Ascending aorta (tissue), 2 donors: ENCODE measurements at regions of chr1 and their contacts with region 1.

Region 1: GRCh38 chr1:9292361-9293240 is at the start of gene SPSB1:
- DNase-seq: peak in 1 of 2 donors; percentile 82
- H3K4me3 ChIP-seq: peak within 1 kb of the TSS; percentile 89 to 95
- H3K27ac ChIP-seq: peak within 1 kb of the TSS; percentile 82 to 98
- H3K4me1 ChIP-seq: peaks cover 8 to 29% of the 10 kb centered on the region in 2 donors
- H3K27me3 ChIP-seq: no peaks in the 10 kb centered on the region
- CTCF ChIP-seq: no peak
- total RNA-seq, gene SPSB1: 64.9 TPM

Region 2: DNA sequence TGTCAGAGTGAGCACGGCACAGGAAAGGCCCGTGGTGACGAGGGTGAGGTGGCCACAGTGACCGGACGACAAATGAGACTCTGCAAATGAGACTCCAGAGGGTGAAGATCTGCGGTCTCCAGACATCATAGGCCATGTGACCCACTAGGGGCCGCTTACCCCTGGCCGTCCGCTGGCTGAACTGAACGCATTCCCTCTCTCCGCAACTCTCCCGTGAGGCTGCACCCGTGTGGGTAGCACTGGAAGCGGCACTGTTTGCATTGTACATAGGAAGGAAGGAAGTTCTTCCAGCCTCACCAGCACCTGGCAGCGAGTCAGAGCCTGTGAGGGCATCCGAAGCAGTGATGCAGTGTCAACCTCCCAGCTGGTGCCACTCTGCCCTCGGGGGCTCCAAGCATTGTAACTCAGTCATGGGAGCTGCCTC is 23.5 kb before region 1 on chr1:
- intact Hi-C with region 1: loop called (anchors 2 kb)
- DNase-seq: no peak
- H3K4me3 ChIP-seq: no peak overlapping the region
- H3K27ac ChIP-seq: no peak overlapping the region
- H3K4me1 ChIP-seq: peaks cover 3 to 7% of the 10 kb centered on the region in 2 donors
- H3K27me3 ChIP-seq: no peaks in the 10 kb centered on the region
- CTCF ChIP-seq: no peak

Region 3: DNA sequence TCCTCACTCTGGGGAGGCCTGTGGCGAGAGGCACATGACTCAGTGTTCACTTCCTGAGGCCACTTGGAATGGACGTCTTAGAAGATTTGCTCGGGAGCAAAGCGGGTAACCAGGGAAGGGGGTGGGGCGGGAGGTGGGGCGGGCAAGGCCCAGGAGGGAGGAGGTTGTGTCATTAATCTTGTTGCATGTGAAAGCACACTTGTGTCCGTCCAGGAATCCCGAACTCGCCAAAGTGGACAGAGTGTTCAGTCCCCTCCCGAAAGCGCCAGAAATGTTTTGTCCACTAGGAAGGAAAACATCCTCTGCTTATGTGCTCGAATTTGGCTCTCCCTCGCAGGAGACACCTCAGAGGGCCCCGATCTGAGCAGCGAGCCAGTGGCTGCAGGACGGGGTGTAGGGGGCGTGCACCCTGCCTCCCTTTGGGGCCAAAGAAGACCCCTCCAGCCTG is 84.3 kb after region 1 on chr1:
- intact Hi-C with region 1: loop called (anchors 2 kb)
- DNase-seq: peak; percentile 66 to 95
- H3K4me3 ChIP-seq: peak overlapping the region in 1 of 2 donors; percentile 41
- H3K27ac ChIP-seq: peak overlapping the region; percentile 89 to 96
- H3K4me1 ChIP-seq: peaks cover 51 to 68% of the 10 kb centered on the region in 2 donors
- H3K27me3 ChIP-seq: no peaks in the 10 kb centered on the region
- CTCF ChIP-seq: peak in 1 of 3 experiments; percentile 12

Region 4: GRCh38 chr1:9449106-9449627 is 156.6 kb after region 1 on chr1:
- intact Hi-C with region 1: loop called (anchors 2 kb)
- DNase-seq: peak in 1 of 2 donors; percentile 92
- H3K4me3 ChIP-seq: peak overlapping the region in 1 of 2 donors; percentile 36
- H3K27ac ChIP-seq: peak overlapping the region; percentile 74 to 81
- H3K4me1 ChIP-seq: peaks cover 12 to 25% of the 10 kb centered on the region in 2 donors
- H3K27me3 ChIP-seq: no peaks in the 10 kb centered on the region
- CTCF ChIP-seq: no peak

Region 5: GRCh38 chr1:9494929-9495758 is 202.5 kb after region 1 on chr1:
- intact Hi-C with region 1: loop called (anchors 1 kb)
- DNase-seq: peak in 1 of 2 donors; percentile 67
- H3K4me3 ChIP-seq: peak overlapping the region in 1 of 2 donors; percentile 47
- H3K27ac ChIP-seq: no peak overlapping the region
- H3K4me1 ChIP-seq: peaks cover 0 to 4% of the 10 kb centered on the region in 2 donors
- H3K27me3 ChIP-seq: no peaks in the 10 kb centered on the region
- CTCF ChIP-seq: peak; percentile 91 to 97 (median 93)